Endothelial cell of umbilical vein (primary cell): ENCODE measurements at regions of chr18 and their contacts with region 1.

Region 1: GRCh38 chr18:59697236-59697932 is at the start of gene CCBE1:
- DNase-seq: peak; percentile 34
- H3K4me3 ChIP-seq: peak within 1 kb of the TSS in 1 of 3 experiments; percentile 8
- H3K27ac ChIP-seq: no peak within 1 kb of the TSS
- H3K4me1 ChIP-seq: peaks cover 2% of the 10 kb centered on the region
- H3K27me3 ChIP-seq: peaks cover 29 to 35% of the 10 kb centered on the region in 2 experiments
- CTCF ChIP-seq: peak; percentile 72 to 91
- POLR2A ChIP-seq: no peak
- total RNA-seq, gene CCBE1: not detected in 2 replicates

Region 2: DNA sequence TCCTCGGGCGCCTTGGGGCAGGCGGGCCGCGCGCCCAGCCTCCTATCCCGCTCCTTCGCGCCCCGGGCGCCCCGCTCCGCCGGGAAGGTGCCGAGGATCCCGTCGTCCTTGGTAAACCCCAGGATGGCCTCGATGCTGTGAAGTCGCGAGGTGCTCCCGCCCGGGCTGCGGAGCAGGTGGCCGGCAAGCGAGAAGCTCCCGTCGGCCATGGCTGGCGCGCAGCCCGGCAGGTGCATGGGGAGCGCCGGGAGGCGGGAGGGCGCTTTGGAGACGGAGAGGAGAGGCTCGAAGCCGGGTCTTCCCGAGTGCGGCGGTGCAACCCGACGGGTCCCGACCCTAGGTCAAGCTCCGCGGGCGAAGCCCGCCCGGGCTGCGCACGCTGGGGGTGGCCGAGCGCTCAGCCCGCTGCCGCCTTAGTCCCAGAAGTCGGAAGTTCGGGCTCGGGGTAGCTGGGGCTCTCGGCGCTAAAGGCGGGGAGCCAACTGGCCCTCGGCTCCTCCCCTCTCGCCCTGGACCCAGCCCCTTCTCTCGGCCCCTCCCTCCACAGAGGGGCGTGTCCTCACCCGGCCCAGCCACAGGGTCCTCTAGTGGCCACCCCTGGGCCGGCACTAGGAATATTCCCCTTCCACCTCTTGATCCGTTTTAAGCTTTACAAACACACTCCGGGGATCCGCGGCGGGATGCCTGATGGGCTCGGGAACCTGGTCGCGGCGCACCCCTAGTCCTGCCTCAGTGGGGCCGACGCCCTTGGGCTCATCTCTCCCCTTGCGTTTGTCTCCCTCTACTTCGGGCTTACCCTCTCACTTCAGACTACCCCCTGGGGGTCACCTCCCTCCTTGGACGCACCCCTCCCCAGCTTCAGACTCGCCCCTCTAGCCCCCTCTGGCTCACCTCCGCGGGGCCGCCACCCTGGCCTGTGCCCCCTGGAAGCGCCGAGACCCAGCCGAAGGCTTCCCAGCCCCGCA is 424.1 kb before region 1 on chr18 and contains the start of gene RAX:
- CTCF ChIA-PET with region 1: no interaction called
- POLR2A ChIA-PET with region 1: no interaction called
- dilution Hi-C with region 1: no loop called
- intact Hi-C with region 1: no loop called
- DNase-seq: peak; percentile 8
- H3K4me3 ChIP-seq: no peak within 1 kb of the TSS
- H3K27ac ChIP-seq: no peak within 1 kb of the TSS
- H3K4me1 ChIP-seq: peaks cover 2% of the 10 kb centered on the region
- H3K27me3 ChIP-seq: peaks cover 82 to 91% of the 10 kb centered on the region in 2 experiments
- CTCF ChIP-seq: peak; percentile 13 to 22
- POLR2A ChIP-seq: no peak
- total RNA-seq, gene RAX: not detected in 2 replicates

Region 3: DNA sequence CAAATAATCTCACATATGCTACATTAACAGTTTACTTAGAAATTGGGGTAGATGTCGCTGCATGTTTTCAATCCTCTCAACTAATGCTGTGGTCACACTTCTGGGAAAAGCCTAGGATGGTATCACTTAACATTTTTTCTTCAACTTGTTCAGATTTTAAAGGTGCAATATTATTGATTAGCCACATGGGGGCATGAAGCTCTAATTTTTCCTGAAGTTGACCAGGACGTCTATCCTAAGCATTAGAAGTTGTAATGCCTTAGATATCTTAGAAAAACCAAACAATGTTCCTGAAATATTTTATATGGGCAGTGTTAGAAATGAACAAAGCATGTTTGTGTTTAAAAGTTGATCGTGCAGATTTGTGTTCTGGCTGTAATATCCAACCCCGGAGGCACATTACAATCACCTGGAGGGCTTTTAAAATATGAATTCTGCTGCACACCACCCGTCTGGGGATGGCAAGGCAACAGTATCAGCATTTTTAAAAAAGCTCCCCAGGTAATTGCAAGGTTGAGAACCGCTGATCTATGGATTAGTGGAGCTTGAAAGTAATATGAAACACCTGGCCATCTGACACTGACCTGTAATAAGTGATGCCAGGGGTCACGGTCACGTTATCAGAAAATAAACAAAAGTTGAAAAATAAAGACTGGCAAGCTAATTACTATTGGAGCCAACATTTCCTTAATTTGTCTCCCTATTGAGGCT is 237.9 kb before region 1 on chr18:
- CTCF ChIA-PET with region 1: interaction called, 79 read pairs
- POLR2A ChIA-PET with region 1: no interaction called
- dilution Hi-C with region 1: no loop called
- intact Hi-C with region 1: no loop called
- DNase-seq: peak; percentile 28
- H3K4me3 ChIP-seq: no peak overlapping the region
- H3K27ac ChIP-seq: no peak overlapping the region
- H3K4me1 ChIP-seq: no peaks in the 10 kb centered on the region
- H3K27me3 ChIP-seq: no peaks in the 10 kb centered on the region
- CTCF ChIP-seq: peak; percentile 17 to 40
- POLR2A ChIP-seq: no peak

Region 4: DNA sequence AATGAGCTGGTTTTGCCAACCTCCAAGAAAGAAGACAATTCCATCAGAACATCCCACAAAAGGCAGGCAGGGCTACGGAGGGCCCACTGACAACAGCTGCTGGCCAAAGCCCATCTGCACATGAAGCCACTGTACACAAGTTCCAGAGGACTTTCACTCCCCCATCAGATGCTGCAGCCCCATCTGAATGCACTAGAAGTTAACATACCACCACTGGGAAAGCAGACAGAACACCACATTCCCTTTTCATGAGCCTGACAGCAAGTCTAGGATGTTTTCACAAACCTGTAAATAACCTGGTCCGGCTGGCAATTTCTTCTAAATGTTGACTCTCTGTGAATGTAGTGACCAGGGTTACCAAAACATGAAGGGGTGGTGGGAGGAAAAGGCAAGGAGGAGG is 41.7 kb before region 1 on chr18:
- CTCF ChIA-PET with region 1: interaction called, 15 read pairs
- POLR2A ChIA-PET with region 1: no interaction called
- dilution Hi-C with region 1: no loop called
- intact Hi-C with region 1: no loop called
- DNase-seq: no peak
- H3K4me3 ChIP-seq: no peak overlapping the region
- H3K27ac ChIP-seq: no peak overlapping the region
- H3K4me1 ChIP-seq: no peaks in the 10 kb centered on the region
- H3K27me3 ChIP-seq: no peaks in the 10 kb centered on the region
- CTCF ChIP-seq: no peak
- POLR2A ChIP-seq: no peak

Region 5: DNA sequence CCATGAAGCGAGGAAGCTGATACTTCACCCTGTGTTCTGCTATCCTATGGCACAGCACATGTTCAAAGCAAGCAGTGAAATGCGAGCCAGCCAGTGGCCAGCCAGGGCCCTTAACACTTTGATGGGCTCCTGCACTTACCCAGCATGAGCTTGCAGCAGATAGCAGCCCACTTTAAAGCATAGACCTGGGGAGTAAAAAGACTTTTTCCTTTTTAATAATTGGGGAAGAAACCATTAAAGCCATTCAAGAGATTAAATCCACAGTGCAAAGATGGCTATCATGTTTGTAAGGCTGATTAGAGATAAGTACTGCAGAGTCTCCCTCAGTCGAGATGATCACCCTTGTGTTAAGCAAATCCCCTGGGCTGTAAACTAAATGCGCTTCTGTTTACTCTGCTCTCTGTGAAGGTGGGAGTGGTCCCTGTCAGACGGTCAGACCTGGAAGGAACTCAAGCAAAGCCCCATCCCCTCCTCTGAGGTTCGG is 15.8 kb before region 1 on chr18:
- CTCF ChIA-PET with region 1: interaction called, 56 read pairs
- POLR2A ChIA-PET with region 1: no interaction called
- dilution Hi-C with region 1: no loop called
- intact Hi-C with region 1: no loop called
- DNase-seq: no peak
- H3K4me3 ChIP-seq: no peak overlapping the region
- H3K27ac ChIP-seq: no peak overlapping the region
- H3K4me1 ChIP-seq: no peaks in the 10 kb centered on the region
- H3K27me3 ChIP-seq: no peaks in the 10 kb centered on the region
- CTCF ChIP-seq: no peak
- POLR2A ChIP-seq: no peak

Region 6: DNA sequence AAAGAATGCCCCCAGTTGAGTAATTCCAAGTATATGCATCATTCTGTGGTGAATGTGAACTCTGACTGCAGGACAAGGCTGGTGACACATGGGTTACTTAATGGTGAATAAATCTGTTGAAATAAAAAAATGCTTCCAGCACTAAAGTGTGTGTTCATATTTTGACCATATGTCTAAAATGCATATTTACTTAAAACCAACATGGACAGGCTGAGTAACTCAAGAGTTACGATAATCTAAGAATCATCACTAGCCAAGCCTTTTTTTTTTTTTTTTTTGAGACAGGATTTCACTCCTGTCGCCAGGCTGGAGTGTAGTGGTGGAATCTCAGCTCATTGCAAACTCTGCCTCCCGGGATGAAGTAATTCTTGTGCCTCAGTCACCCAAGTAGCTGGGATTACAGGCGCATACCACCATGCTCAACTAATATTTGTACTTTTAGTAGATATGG is 46.9 kb after region 1 on chr18:
- CTCF ChIA-PET with region 1: interaction called, 15 read pairs
- POLR2A ChIA-PET with region 1: no interaction called
- dilution Hi-C with region 1: no loop called
- intact Hi-C with region 1: no loop called
- DNase-seq: no peak
- H3K4me3 ChIP-seq: no peak overlapping the region
- H3K27ac ChIP-seq: no peak overlapping the region
- H3K4me1 ChIP-seq: no peaks in the 10 kb centered on the region
- H3K27me3 ChIP-seq: no peaks in the 10 kb centered on the region
- CTCF ChIP-seq: no peak
- POLR2A ChIP-seq: no peak

Region 7: DNA sequence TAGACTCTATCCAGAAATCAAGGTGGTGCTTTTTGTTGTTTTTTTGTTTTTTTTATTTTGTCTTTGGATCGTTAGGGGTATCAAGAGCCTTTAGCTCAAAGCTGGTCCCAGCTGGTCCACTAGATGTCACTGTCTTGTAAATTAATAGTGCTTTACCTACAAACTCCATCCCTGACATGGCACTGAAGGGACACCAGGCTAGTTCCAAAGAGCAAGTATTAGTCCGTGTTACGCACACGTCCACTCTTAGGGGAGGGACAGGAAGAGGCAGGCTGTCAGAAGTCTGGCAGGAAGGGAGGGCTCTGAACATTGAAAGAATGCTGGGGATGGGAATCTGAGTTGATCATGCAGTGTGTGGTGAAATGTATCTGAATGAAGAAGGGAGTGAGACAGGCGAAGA is 85.8 kb after region 1 on chr18:
- CTCF ChIA-PET with region 1: interaction called, 93 read pairs
- POLR2A ChIA-PET with region 1: no interaction called
- dilution Hi-C with region 1: no loop called
- intact Hi-C with region 1: no loop called
- DNase-seq: peak; percentile 30
- H3K4me3 ChIP-seq: no peak overlapping the region
- H3K27ac ChIP-seq: no peak overlapping the region
- H3K4me1 ChIP-seq: no peaks in the 10 kb centered on the region
- H3K27me3 ChIP-seq: no peaks in the 10 kb centered on the region
- CTCF ChIP-seq: peak; percentile 41 to 47
- POLR2A ChIP-seq: no peak

Region 8: GRCh38 chr18:59885579-59886163 is 188.3 kb after region 1 on chr18:
- CTCF ChIA-PET with region 1: no interaction called
- POLR2A ChIA-PET with region 1: no interaction called
- dilution Hi-C with region 1: no loop called
- intact Hi-C with region 1: no loop called
- DNase-seq: peak; percentile 72
- H3K4me3 ChIP-seq: peak overlapping the region in 1 of 3 experiments; percentile 39
- H3K27ac ChIP-seq: peak overlapping the region; percentile 89
- H3K4me1 ChIP-seq: peaks cover 41% of the 10 kb centered on the region
- H3K27me3 ChIP-seq: no peaks in the 10 kb centered on the region
- CTCF ChIP-seq: no peak
- POLR2A ChIP-seq: no peak

Region 9: DNA sequence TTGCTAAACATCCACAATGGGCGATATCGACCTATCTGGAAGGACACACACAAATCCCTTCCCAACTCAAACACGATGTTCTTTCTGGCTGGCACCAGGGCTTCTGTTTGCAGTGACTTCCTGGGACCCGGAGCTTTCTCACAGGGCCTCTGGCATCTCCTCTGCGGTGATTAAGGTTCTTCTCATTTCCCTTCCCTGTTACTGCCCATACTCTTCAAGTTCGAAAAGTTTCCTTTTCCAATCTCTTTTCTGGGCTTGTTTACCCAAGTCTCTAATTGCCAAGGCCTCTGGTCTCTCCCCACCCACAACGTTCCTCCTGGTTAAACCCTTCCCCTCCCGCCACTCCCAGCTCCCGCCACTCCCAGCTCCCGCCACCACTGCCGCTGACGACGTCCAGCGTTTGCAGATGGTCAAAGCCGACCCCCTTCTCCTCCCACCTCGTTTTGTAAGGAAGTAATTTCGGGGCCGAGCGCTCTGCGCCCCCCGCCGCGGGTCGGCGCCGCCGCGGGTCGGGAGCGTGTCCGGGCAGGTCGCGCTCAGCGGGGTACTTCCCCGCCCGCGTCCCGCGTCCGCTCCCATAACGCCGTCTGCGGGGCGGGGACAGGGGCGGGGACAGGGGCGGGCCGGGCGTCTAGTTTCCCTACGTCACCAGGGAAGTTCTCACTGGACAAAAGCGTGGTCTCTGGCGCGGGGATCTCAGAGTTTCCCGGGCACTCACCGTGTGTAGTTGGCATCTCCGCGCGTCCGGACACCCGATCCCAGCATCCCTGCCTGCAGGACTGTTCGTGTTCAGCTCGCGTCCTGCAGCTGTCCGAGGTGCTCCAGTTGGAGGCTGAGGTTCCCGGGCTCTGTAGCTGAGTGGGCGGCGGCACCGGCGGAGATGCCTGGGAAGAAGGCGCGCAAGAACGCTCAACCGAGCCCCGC is 202.2 kb after region 1 on chr18 and contains the start of gene PMAIP1:
- CTCF ChIA-PET with region 1: interaction called, 13 read pairs
- POLR2A ChIA-PET with region 1: interaction called, 3 read pairs
- dilution Hi-C with region 1: no loop called
- intact Hi-C with region 1: no loop called
- DNase-seq: peak; percentile 91
- H3K4me3 ChIP-seq: peak within 1 kb of the TSS; percentile 58 to 88 (median 76)
- H3K27ac ChIP-seq: peak within 1 kb of the TSS; percentile 75
- H3K4me1 ChIP-seq: peaks cover 27% of the 10 kb centered on the region
- H3K27me3 ChIP-seq: peaks cover 1 to 9% of the 10 kb centered on the region in 2 experiments
- CTCF ChIP-seq: no peak
- POLR2A ChIP-seq: peak; percentile 99
- total RNA-seq, gene PMAIP1: 11.9 and 13.5 TPM in 2 replicates